ENCODE measurements at regions of chr1 and their contacts with region 1.

Region 1: DNA sequence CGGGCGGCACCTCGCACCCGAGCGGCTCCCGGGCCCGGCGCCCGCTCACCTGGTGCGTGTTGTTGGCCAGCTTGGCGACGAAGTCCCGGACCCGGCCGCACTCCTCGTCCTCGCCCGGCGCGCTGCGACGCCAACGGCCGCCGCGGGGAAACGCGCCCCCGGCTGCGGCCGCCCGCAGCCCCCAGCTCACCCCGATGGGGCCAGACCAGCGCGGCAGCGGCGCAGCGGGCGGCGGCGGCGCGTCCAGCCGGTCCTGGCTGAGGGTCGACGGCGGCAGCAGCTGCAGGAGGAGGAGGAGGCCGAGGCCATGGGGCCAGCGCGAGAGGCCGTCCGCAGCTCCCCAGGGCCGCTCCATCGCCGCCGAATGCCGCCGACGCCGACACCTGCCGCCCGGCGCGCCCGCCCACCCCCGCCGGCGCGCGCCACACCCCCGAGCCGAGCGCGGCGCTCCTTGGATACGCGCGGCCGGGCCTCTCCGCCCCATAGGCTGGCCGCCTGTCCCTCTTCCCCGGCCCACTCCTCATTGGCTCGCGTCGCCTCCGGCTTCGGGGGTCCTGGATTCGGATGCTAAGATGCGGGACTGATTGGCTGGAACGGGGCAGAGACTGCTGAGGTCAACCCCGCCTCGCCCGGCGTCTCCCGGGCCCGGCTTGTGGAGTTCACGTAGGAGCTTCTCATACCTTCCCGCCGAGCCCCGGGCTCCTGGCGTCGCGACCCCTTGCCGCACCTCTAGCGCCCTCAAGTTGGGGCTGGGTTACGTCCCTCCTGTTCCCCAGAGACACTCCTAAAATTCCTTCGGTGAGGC is at the start of gene SORT1:
- DNase-seq: peak; percentile 79
- CTCF ChIP-seq: no peak

Region 2: DNA sequence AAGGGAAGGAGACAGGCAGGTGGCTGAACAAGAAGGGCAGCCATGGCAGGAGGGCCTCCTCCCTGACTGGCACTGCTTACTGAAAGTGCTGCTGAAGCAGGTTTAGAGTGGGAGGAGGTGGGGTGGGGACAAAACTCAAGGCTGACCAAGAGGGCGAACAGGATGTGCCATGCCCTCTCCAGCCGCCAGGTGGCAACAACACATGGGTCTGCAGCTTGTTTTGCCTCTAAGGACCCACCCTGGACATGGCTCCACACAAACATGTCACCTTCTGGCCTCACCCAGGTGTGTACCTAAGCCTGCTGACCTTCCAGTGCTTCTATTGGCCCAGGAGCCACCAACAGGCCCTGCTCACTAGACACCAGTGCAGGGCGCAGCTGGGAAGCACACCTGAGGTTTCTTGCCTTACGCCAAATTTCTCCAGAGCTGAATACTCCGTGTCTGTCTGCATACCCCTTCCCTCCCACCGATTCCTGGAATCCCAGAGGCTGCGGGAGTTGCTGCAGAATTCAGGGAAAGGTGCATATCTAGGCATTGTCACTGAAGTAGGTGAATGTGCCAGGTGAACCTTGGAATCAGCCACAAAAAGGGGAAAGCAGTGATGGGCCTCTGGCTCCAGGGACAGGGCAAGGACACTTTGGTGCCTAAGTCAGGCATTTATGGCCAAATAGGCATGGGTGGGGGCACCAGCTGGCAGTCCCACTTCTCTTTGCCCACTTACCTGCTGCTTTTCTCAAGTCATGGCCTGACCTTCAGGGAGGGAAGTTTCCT is 120.1 kb before region 1 on chr1:
- in situ Hi-C with region 1: loop called (anchors 5 kb)
- DNase-seq: peak; percentile 89
- CTCF ChIP-seq: peak; percentile 84